Posterior vena cava (tissue), 2 donors: ENCODE measurements at regions of chr1 and their contacts with region 1.

Region 1: GRCh38 chr1:147210987-147211386 is 14.2 kb downstream of the FMO5 start:
- DNase-seq: no peak

Region 2: GRCh38 chr1:147177611-147178380 is 33.2 kb before region 1 on chr1:
- intact Hi-C with region 1: no loop called
- DNase-seq: no peak

Region 3: DNA sequence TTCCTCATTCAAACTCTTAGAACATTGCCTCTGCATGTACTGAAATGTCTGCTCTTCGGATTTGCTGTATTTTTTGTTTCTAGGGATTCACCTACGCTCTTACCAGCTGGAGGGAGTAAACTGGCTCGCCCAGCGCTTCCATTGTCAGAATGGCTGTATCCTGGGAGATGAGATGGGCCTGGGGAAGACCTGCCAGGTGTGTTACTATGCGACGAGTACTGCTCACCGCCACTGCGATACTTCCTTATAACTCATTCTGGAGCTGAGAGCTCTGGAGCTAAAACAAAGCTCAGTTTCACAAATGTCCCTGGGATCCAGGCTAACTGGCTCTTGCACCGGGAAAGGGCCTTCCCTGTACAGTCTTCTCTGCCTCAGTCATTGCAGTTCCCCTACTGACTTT is 41.6 kb after region 1 on chr1:
- intact Hi-C with region 1: loop called in 1 of 2 experiments (anchors 2 kb)
- DNase-seq: no peak